ENCODE measurements at regions of chr15 and their contacts with region 1.

Region 1: DNA sequence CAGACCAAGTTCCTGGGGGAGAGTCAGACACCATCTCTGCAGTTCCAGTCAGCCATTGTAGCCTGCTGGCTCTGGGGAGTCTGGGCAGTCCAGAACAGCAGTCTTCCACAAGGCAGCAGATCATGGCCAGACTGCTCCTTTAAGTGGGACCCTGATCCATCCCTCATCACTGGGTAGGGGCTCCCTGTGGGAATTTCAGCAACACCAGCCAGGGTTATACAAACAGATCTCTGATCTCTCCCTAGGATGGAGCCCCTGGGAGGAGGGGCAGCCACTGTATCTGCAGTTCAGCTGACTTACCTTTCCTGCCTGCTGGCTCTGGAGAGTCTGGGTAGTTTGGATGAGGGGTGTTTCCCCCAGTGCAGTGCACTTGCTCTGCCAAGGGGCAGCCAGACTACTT is 42.1 kb upstream of the UNC13C start:
- DNase-seq: no peak
- H3K4me3 Mint-ChIP-seq: no peak overlapping the region
- H3K27ac Mint-ChIP-seq: no peak overlapping the region
- H3K4me1 Mint-ChIP-seq: no peaks in the 10 kb centered on the region
- H3K27me3 Mint-ChIP-seq: peaks cover 4% of the 10 kb centered on the region

Region 2: DNA sequence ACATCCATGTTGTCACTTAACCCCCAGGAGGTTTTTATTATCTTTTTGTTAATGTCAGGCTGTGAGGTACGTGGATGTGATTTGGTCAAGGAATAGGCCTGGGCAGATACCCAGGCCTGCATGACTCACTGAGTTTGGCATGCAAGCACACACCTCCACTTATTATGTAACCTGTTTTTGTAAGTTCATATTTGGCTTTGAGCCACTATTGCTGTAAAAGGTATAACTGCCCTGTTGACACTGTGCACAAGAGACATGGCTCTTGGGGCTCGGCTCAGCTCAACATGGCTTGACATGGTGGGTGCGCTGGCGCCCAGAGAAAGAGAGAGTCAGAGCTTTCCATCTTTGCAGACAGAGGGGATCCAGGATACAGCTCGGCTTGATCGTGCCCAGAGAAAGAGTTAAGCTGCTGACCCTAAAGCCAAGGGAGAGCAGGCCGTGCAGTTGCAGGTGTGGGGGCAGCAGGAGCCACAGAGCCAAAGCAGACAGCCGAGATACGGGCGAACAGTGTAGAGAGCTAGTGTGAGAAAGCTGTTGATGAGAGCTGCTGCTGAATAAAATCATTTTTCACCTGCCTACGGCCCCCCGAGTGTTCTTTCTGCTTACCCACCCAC is 25.8 kb before region 1 on chr15:
- CTCF ChIA-PET with region 1: no interaction called
- POLR2A ChIA-PET with region 1: no interaction called
- intact Hi-C with region 1: loop called (anchors 1 kb)
- DNase-seq: no peak
- H3K4me3 Mint-ChIP-seq: no peak overlapping the region
- H3K27ac Mint-ChIP-seq: no peak overlapping the region
- H3K4me1 Mint-ChIP-seq: no peaks in the 10 kb centered on the region
- H3K27me3 Mint-ChIP-seq: no peaks in the 10 kb centered on the region

Measured in activated CD4-positive, alpha-beta memory T cell treated with anti-CD3 and anti-CD28 coated beads for 36 hours (primary cell).